ENCODE measurements at regions of chr16 and their contacts with region 1.

Region 1: DNA sequence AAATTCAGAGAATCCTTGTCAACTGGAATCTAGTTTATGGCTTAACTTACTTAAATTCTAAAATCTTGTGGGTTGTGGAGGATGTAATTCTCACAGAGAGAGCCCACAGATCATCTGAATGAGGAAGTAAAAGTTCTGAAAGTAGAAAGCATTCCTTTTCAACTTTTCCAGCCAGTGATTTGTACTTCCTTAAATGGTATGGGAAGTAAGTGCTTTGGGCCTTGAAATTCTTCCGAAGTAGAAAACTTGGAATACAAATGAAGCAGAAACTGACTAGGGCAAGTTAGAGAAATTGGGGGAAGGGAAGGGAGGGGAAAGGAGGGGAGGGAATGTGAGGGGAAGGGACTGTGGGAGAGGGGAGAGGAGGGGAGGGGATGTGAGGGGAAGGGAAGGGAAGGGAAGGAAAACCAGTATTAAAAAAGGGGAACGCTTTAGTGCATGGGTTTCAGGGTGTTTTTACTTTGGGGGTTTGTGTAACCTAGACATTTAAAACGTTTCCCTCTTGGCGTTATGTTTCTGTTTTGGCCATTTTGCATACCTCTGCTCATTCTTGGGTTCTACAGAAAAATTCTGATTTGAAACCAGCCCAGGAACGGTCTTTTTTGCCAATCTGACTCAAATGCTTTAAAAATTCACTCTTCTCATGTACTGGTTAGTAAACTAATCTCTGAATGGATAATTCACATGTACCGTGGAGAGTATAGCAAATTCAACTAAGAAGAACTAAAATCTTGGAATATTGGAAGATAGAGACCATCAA is 15.5 kb upstream of the SNTB2 start:
- DNase-seq: no peak
- H3K4me3 ChIP-seq: no peak overlapping the region
- H3K27ac ChIP-seq: no peak overlapping the region
- H3K4me1 ChIP-seq: peaks cover 26% of the 10 kb centered on the region
- H3K27me3 ChIP-seq: no peaks in the 10 kb centered on the region
- CTCF ChIP-seq: no peak

Region 2: DNA sequence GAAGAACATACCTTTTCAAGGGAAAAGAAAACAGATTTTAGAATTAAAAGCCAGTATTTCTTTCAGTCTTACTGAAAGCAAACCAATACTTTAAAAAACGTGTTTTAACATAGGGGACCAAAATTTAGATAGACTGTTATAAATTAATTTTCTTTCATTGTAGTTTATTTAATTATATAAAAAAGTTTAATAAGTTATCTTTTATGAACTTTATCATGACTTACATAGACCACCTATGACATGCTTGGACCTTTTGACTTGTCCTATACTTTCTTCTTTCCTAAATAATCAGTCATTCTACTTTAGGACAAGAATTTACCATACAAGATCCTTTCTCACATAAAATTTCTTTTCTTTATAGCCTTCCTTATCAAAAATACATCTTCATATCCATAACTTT is 168.0 kb before region 1 on chr16:
- CTCF ChIA-PET with region 1: no interaction called
- dilution Hi-C with region 1: no loop called
- in situ Hi-C with region 1: no loop called
- intact Hi-C with region 1: no loop called
- DNase-seq: no peak
- H3K4me3 ChIP-seq: no peak overlapping the region
- H3K27ac ChIP-seq: no peak overlapping the region
- H3K4me1 ChIP-seq: peaks cover 4% of the 10 kb centered on the region
- H3K27me3 ChIP-seq: no peaks in the 10 kb centered on the region
- CTCF ChIP-seq: no peak

Region 3: GRCh38 chr16:69186642-69187445 is 15.3 kb after region 1 on chr16 and contains the start of gene SNTB2:
- CTCF ChIA-PET with region 1: interaction called, 6 read pairs
- dilution Hi-C with region 1: no loop called
- in situ Hi-C with region 1: no loop called
- intact Hi-C with region 1: loop called (anchors 2 kb)
- DNase-seq: peak; percentile 87
- H3K4me3 ChIP-seq: peak within 1 kb of the TSS; percentile 81 to 93 (median 85)
- H3K27ac ChIP-seq: peak within 1 kb of the TSS; percentile 65
- H3K4me1 ChIP-seq: peaks cover 43% of the 10 kb centered on the region
- H3K27me3 ChIP-seq: no peaks in the 10 kb centered on the region
- CTCF ChIP-seq: no peak
- total RNA-seq, gene SNTB2: 20.3 to 31.2 TPM

Measured in mammary epithelial cell (primary cell).